Right ventricle myocardium inferior (tissue), 1 donor: ENCODE measurements at regions of chr13 and their contacts with region 1.

Region 1: DNA sequence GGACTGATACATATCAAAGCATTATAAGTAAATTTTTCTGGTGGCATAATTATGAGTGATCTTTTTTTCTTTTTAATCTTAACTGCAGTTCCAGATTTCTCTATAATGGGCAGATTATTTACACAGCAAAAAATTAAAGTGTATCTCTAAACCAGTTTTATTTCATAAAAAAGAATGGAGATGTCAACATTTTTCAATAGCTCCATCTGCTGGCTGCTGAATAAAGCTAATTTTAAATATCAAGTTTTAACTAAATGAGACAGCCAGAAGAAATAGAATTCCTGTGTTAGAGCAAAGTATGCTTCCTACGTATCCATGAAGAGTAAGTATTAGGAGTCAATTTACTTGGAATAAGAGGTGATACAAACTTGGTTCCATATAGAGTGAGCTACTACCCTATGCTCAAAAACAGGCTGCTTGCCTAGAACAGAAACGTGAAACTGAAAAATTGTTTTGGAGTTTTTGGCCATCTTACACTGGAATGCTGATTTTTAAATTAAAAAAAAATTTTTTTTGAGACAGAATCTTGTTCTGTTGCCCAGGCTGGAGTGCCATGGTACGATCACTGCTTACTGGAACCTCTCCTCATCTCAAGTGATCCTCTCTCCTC is 5.0 kb upstream of the PDS5B start:
- DNase-seq: no peak
- ATAC-seq: no peak

Region 2: DNA sequence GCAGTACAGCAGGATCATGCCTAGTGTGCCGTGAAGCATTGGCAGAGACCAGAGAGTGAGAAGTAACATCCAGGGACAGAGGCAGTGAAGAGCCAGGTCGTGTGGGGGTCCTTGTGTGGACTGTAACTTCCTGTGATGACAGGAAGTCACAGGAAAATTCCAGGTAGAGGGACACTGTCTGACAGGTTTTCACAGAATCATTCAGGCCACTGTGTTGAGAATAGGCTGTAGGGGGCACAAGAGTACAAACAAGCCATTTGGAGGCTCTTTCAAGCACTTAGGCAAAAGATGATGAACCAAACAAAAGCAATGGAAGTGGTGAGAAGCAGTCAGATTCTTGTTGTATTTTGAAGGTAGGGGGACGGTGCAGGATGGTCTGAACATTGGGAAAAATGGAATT is 199.7 kb before region 1 on chr13:
- intact Hi-C with region 1: loop called (anchors 5 kb)
- DNase-seq: no peak
- ATAC-seq: peak; percentile 48

Region 3: DNA sequence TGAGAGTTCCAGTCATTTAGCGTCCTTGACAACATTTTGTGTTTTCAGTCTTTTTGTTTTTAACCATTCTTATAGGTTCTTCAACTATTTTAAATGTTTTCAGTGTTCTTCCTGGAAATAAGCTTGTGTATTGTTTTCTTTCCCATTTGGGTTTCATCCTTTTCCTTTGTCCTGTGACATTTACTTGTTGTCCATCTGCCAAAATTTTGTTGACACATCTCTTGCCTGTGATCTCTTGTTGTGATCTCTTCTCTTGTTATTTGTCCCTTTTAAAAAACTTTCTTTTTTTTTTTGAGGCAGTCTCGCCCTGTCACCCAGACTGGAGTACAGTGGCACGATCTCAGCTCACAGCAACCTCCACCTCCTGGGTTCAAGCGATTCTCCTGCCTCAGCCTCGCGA is 101.5 kb after region 1 on chr13:
- intact Hi-C with region 1: no loop called
- DNase-seq: no peak
- ATAC-seq: no peak

Region 4: DNA sequence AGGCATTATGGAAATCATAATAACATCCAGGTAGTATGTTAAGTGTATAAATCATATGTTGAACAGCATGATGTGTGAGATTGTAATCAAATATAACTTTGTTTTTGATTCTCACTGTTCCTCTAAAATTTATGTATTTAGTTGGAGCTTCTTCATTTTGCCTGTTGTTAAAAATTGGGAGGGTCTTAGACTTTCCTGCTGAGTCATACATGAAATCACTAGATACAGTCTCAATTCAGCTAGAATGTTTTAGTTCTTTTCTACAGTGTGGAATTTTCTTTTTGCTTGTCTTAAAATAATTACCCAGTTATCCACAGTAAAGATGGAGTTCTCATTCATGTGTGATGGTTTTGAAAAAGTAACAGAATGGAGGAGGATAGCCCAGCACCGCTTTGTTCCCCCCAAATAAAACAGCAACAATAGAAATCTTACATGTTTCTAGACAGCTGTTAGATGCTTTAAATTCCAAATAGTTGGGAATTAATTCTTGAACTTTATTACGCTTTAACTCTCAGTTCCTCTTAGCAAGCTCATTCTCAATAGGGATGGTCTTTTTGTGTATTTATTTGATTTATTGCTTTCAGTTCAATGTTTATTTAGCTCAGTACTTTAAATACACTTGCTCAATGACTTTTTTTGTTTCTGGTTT is 114.4 kb after region 1 on chr13:
- intact Hi-C with region 1: no loop called
- DNase-seq: no peak
- ATAC-seq: no peak